Activated T-helper 2 cell treated with anti-CD3 and anti-CD28 coated beads, Interferon-gamma antibody, Interleukin-2, Interleukin-4, amounts not matched to agents 10 μg/mL and 5 μg/mL and 100 μg/mL, durations not matched to agents 14 hours and 24 hours and 36 hours (primary cell): ENCODE measurements at regions of chr17 and their contacts with region 1.

Region 1: DNA sequence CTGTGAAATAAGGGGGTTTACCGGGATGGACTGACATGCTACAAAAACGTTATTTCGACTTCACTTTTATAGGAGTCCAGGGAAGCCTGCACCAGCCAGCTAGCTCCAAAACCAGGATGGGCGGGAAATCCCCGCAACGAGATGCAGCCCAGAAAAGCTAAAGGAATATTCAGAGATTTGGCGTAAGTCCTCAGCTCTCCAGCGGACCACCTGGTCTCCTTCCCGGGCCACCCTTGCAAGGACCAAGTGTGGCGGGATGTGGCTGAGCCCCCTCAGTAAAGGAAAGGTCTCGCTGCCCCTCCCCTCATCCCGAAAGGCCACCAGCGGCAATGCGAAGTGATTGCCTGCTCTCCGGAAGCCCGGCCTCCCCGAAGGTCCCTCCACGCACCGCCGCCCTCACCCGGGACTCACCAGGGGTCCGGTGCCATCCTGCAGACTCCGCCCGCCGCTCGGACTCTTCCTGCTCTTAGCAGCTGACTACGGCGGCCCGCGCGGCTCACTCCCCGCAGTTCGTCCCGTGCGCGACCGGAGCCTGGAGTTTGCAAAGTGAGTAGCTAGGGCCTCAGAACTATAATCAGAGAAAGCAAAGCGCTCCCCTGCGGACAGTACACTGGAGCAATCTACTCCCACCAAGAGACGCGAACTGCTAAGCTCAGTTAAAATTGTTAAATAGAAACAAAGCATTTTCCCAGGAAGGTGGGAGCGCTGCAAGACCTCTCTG is at the start of gene STX8:
- DNase-seq: peak; percentile 75
- H3K4me3 Mint-ChIP-seq: peak within 1 kb of the TSS; percentile 95
- H3K27ac Mint-ChIP-seq: peak within 1 kb of the TSS; percentile 79
- H3K4me1 Mint-ChIP-seq: peaks cover 15% of the 10 kb centered on the region
- H3K27me3 Mint-ChIP-seq: no peaks in the 10 kb centered on the region
- total RNA-seq, gene STX8: 52.1 and 54.8 TPM in 2 replicates

Region 2: DNA sequence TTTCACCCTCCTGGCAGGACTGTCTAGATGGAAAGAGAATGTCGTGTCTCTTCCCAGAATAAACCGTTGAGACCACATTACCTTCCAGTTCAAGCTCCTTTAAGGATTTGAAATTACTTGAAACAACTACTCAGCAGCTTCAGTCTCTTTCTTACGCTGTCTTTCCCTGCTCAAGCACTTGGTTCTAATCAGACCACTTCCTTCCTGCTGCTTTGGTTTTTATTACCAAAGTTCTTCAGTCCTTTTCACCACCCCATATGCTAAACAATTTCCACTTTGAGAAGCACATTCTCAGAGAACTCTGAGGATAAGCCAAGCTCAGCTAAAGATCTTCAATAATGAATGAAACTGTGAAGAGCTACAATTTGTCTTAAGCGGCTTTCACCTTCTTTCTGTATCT is 105.4 kb before region 1 on chr17:
- intact Hi-C with region 1: no loop called
- DNase-seq: peak; percentile 12
- H3K4me3 Mint-ChIP-seq: peak overlapping the region; percentile 13
- H3K27ac Mint-ChIP-seq: peak overlapping the region; percentile 75
- H3K4me1 Mint-ChIP-seq: peaks cover 23% of the 10 kb centered on the region
- H3K27me3 Mint-ChIP-seq: no peaks in the 10 kb centered on the region

Region 3: GRCh38 chr17:9743096-9743495 is 167.6 kb after region 1 on chr17:
- intact Hi-C with region 1: loop called (anchors 10 kb)
- DNase-seq: no peak
- H3K4me3 Mint-ChIP-seq: no peak overlapping the region
- H3K27ac Mint-ChIP-seq: no peak overlapping the region
- H3K4me1 Mint-ChIP-seq: no peaks in the 10 kb centered on the region
- H3K27me3 Mint-ChIP-seq: peaks cover 3% of the 10 kb centered on the region